T-cell (primary cell): ENCODE measurements at regions of chr9 and their contacts with region 1.

Region 1: GRCh38 chr9:38692707-38693106 is 27.2 kb downstream of the FAM240B start:
- DNase-seq: no peak
- ATAC-seq: no peak
- H3K4me3 ChIP-seq: no peak overlapping the region
- H3K4me3 Mint-ChIP-seq: no peak overlapping the region
- H3K27ac ChIP-seq: no peak overlapping the region
- H3K27ac Mint-ChIP-seq: no peak overlapping the region
- H3K4me1 ChIP-seq: no peaks in the 10 kb centered on the region
- H3K4me1 Mint-ChIP-seq: peaks cover 0 to under 1% (median 0%) of the 10 kb centered on the region in 3 donors
- H3K27me3 ChIP-seq: peaks cover 0 to 14% of the 10 kb centered on the region in 2 experiments
- H3K27me3 Mint-ChIP-seq: peaks cover 9% of the 10 kb centered on the region in 2 donors

Region 2: GRCh38 chr9:38707885-38708637 is 15.4 kb after region 1 on chr9:
- CTCF ChIA-PET with region 1: no interaction called
- POLR2A ChIA-PET with region 1: interaction called in 1 of 2 experiments, 12 read pairs
- DNase-seq: peak in 1 of 35 experiments; percentile 8
- ATAC-seq: no peak
- H3K4me3 ChIP-seq: no peak overlapping the region
- H3K4me3 Mint-ChIP-seq: no peak overlapping the region
- H3K27ac ChIP-seq: no peak overlapping the region
- H3K27ac Mint-ChIP-seq: no peak overlapping the region
- H3K4me1 ChIP-seq: no peaks in the 10 kb centered on the region
- H3K4me1 Mint-ChIP-seq: no peaks in the 10 kb centered on the region
- H3K27me3 ChIP-seq: peaks cover 3 to 20% of the 10 kb centered on the region in 2 experiments
- H3K27me3 Mint-ChIP-seq: peaks cover 21 to 34% of the 10 kb centered on the region in 2 donors